T-cell (primary cell): ENCODE measurements at regions of chr6 and their contacts with region 1.

Region 1: GRCh38 chr6:150987855-150988464 is 122.5 kb downstream of the MTHFD1L start:
- DNase-seq: no peak
- ATAC-seq: peak in 1 of 4 experiments; percentile 22
- H3K4me3 ChIP-seq: no peak overlapping the region
- H3K4me3 Mint-ChIP-seq: no peak overlapping the region
- H3K27ac ChIP-seq: peak overlapping the region; percentile 48
- H3K27ac Mint-ChIP-seq: peak overlapping the region; percentile 90 to 93
- H3K4me1 ChIP-seq: peaks cover 0 to 6% of the 10 kb centered on the region in 2 experiments
- H3K4me1 Mint-ChIP-seq: peaks cover 0 to 8% (median 8%) of the 10 kb centered on the region in 3 donors
- H3K27me3 ChIP-seq: no peaks in the 10 kb centered on the region
- H3K27me3 Mint-ChIP-seq: no peaks in the 10 kb centered on the region

Region 2: GRCh38 chr6:149259753-149260152 is 1728.2 kb before region 1 on chr6:
- CTCF ChIA-PET with region 1: interaction called in 1 of 2 experiments, 10 read pairs
- POLR2A ChIA-PET with region 1: no interaction called
- DNase-seq: peak in 1 of 35 experiments; percentile 21
- ATAC-seq: no peak
- H3K4me3 ChIP-seq: no peak overlapping the region
- H3K4me3 Mint-ChIP-seq: no peak overlapping the region
- H3K27ac ChIP-seq: no peak overlapping the region
- H3K27ac Mint-ChIP-seq: no peak overlapping the region
- H3K4me1 ChIP-seq: peaks cover 15 to 25% of the 10 kb centered on the region in 2 experiments
- H3K4me1 Mint-ChIP-seq: peaks cover 38 to 50% (median 46%) of the 10 kb centered on the region in 3 donors
- H3K27me3 ChIP-seq: no peaks in the 10 kb centered on the region
- H3K27me3 Mint-ChIP-seq: no peaks in the 10 kb centered on the region